ENCODE measurements at regions of chr1 and their contacts with region 1.

Region 1: GRCh38 chr1:43171876-43172526 is at the starts of genes CFAP57 and EBNA1BP2:
- DNase-seq: peak; percentile 94
- ATAC-seq: peak; percentile 93
- H3K4me3 Mint-ChIP-seq: peak within 1 kb of the TSS; percentile 93
- H3K27ac Mint-ChIP-seq: peak within 1 kb of the TSS; percentile 95
- H3K4me1 Mint-ChIP-seq: peaks cover 29% of the 10 kb centered on the region
- H3K27me3 Mint-ChIP-seq: peaks cover 9% of the 10 kb centered on the region
- total RNA-seq, gene CFAP57: 0.11 TPM in 1 of 2 experiments, not detected in the other
- total RNA-seq, gene EBNA1BP2: 100 to 114 TPM

Region 2: DNA sequence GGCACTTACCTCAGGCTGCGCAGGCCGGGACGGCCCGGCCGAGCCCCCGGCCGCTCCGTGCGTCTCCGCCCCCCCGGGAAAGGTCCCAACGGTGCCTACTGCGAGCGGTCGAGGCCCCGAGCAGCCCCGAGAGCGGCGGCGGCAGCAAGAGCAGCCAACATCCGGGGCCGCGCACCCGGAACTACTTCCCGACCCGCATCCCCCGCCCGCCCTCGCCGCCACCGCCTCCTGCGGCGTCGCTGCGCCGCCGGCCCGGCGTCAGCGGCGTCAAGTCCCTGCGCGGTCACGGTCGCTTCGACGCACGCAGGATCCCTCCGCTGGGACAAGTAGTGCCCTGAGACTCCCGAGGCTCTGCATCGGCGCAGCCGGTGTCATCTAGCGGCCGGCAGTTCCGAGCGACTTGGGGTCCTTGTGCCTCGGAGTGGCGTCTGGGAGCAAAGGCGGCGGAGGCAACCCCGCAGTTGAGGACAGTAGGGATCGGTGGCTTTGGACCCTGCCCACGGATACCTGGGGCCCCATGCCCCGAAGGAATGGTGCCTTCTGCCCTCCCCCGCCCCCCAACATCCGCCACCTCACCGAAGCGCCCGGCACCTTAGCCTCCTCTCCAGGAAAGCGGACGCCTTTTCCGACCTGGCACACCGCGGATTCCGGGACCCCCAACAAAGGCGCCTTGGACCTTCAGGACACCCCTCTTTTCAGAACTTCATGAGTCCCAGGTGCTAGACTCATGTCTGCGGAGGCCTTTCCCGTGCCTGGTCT is 836.8 kb before region 1 on chr1 and contains the start of gene FOXJ3:
- CTCF ChIA-PET with region 1: no interaction called
- POLR2A ChIA-PET with region 1: no interaction called
- intact Hi-C with region 1: loop called in 1 of 2 experiments (anchors 1 kb)
- DNase-seq: peak; percentile 97
- ATAC-seq: peak; percentile 89
- H3K4me3 Mint-ChIP-seq: peak within 1 kb of the TSS; percentile 92
- H3K27ac Mint-ChIP-seq: peak within 1 kb of the TSS; percentile 89
- H3K4me1 Mint-ChIP-seq: peaks cover 41% of the 10 kb centered on the region
- H3K27me3 Mint-ChIP-seq: no peaks in the 10 kb centered on the region
- total RNA-seq, gene FOXJ3: 44.1 to 54.0 TPM

Region 3: DNA sequence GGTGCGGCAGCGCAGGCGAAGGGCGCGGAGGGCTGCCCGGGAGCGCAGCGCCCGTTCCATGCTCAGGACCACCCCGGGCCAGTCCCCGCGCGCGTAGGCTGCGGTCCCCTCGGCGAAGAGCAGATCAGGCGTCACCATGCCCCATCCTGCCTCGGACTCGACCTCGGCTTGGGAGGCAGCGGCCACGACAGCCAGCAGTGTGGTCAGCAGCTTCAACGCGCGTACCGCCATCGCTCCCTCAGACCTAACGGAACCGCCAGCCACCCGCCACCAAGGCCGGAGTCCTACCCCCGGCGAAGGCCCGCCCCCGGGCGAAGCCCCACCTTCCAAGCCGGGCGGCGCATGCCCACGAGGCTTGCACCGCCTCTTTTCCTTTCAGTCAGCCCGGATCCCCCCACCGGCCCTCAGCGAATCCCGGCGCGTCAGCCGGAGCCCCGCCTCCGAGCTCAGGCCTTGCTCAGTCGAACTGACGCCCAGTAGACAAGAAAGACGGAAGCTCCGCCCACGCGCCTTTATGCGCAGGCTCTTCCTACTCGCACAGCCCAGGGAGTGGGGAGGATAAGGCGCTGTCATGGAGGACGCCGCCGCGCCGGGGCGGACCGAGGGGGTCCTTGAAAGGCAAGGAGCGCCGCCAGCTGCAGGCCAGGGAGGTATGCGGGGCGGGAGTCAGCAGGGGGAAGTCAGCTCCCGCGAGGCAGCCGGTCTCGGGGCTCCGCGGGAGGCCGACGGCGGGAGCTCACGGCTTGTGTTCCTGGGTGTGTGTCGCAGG is 405.1 kb before region 1 on chr1 and contains the starts of genes C1orf50 and P3H1:
- CTCF ChIA-PET with region 1: no interaction called
- POLR2A ChIA-PET with region 1: no interaction called
- intact Hi-C with region 1: loop called (anchors 1 to 2 kb)
- DNase-seq: peak; percentile 100
- ATAC-seq: peak; percentile 96
- H3K4me3 Mint-ChIP-seq: no peak within 1 kb of the TSS
- H3K27ac Mint-ChIP-seq: peak within 1 kb of the TSS; percentile 85
- H3K4me1 Mint-ChIP-seq: peaks cover 36% of the 10 kb centered on the region
- H3K27me3 Mint-ChIP-seq: no peaks in the 10 kb centered on the region
- total RNA-seq, gene C1orf50: 4.0 to 8.0 TPM
- total RNA-seq, gene P3H1: 24.3 to 28.8 TPM

Region 4: GRCh38 chr1:42931108-42931539 is 240.9 kb before region 1 on chr1:
- CTCF ChIA-PET with region 1: interaction called, 3 read pairs
- POLR2A ChIA-PET with region 1: no interaction called
- intact Hi-C with region 1: loop called in 1 of 2 experiments (anchors 5 kb)
- DNase-seq: peak; percentile 64
- ATAC-seq: peak; percentile 31
- H3K4me3 Mint-ChIP-seq: peak overlapping the region; percentile 62
- H3K27ac Mint-ChIP-seq: peak overlapping the region; percentile 92
- H3K4me1 Mint-ChIP-seq: peaks cover 63% of the 10 kb centered on the region
- H3K27me3 Mint-ChIP-seq: no peaks in the 10 kb centered on the region

Region 5: GRCh38 chr1:43367904-43368645 is 196.1 kb after region 1 on chr1 and contains the start of gene ELOVL1:
- CTCF ChIA-PET with region 1: no interaction called
- POLR2A ChIA-PET with region 1: no interaction called
- intact Hi-C with region 1: loop called in 1 of 2 experiments (anchors 1 kb)
- DNase-seq: peak; percentile 94
- ATAC-seq: peak; percentile 83
- H3K4me3 Mint-ChIP-seq: peak within 1 kb of the TSS; percentile 90
- H3K27ac Mint-ChIP-seq: peak within 1 kb of the TSS; percentile 93
- H3K4me1 Mint-ChIP-seq: peaks cover 30% of the 10 kb centered on the region
- H3K27me3 Mint-ChIP-seq: no peaks in the 10 kb centered on the region
- total RNA-seq, gene ELOVL1: 56.0 to 72.1 TPM

Region 6: GRCh38 chr1:43706598-43707495 is 534.8 kb after region 1 on chr1:
- CTCF ChIA-PET with region 1: no interaction called
- POLR2A ChIA-PET with region 1: no interaction called
- intact Hi-C with region 1: loop called in 1 of 2 experiments (anchors 1 kb)
- DNase-seq: peak; percentile 97
- ATAC-seq: peak; percentile 97
- H3K4me3 Mint-ChIP-seq: peak overlapping the region; percentile 89
- H3K27ac Mint-ChIP-seq: peak overlapping the region; percentile 83
- H3K4me1 Mint-ChIP-seq: peaks cover 32% of the 10 kb centered on the region
- H3K27me3 Mint-ChIP-seq: no peaks in the 10 kb centered on the region

Measured in activated CD4-positive, alpha-beta T cell treated with anti-CD3 and anti-CD28 coated beads for 36 hours (primary cell).